Activated CD4-positive, alpha-beta T cell treated with anti-CD3 and anti-CD28 coated beads, Interleukin-2, amount 10 ng/mL, durations not matched to agents 7 days and 5 days (primary cell): ENCODE measurements at regions of chr2 and their contacts with region 1.

Region 1: DNA sequence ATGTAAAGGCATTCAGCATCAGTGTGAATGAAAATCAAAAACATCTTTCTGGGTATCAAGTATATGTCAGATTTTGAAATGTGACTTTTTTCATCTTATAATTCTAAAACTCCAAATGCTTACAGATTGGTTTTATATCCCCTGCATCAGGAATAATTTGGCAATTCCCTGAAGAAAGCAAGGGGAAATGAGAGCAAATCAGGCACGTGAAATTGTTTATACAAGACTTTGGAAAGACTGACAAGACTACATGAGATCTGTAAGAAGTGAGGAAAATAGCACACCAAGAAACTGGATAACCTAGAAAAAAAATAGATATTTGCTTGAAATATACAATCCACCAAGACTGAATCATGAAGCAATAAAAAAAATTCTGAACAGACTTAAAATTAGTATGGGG is 13.8 kb downstream of the COL6A3 start:
- DNase-seq: no peak
- H3K4me3 Mint-ChIP-seq: no peak overlapping the region
- H3K27ac Mint-ChIP-seq: no peak overlapping the region
- H3K4me1 Mint-ChIP-seq: no peaks in the 10 kb centered on the region
- H3K27me3 Mint-ChIP-seq: no peaks in the 10 kb centered on the region

Region 2: DNA sequence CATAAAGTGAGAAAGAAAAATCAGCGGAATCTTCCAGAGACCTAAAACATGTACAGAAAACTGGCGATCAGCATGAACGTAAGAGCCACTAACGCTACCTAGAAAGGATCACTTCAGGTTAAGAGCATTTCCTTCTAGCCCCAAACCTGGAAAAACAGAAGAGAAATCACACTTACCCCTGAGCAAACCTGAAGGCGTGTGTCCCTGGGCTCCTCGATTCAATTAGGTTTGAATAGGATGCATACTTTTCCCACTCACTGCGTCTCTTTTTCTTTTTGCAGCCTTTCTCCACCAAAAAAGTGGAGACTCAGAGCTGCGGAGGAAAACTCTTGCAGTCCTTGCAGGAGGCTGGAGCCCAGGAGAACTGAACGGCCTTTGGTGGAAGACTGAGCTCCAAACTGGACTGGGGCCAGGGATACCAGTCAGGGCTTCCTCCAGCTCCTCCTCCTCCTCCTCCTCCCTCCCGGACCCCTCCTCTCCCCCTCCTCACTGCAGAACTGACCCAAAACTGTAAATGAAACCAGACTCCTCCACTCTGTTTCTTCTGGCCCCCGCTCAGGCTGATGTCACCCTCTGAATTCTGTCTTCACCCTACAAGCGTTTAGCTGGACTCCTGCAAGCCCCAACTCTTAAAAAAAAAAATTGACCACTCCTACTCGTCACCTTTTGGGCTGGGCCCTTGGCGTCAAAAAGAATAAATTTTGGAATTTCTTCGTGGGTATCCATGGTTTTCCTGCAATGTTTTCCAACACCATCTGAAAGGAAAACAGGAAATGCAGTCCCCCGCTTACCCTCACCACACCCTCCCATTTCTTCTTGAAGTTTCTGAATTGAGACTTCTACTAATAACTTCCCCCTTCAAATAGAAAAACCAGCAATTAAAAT is 13.8 kb after region 1 on chr2 and contains the start of gene COL6A3:
- CTCF ChIA-PET with region 1: interaction called, 10 read pairs
- POLR2A ChIA-PET with region 1: no interaction called
- DNase-seq: no peak
- H3K4me3 Mint-ChIP-seq: no peak within 1 kb of the TSS
- H3K27ac Mint-ChIP-seq: no peak within 1 kb of the TSS
- H3K4me1 Mint-ChIP-seq: no peaks in the 10 kb centered on the region
- H3K27me3 Mint-ChIP-seq: no peaks in the 10 kb centered on the region
- total RNA-seq, gene COL6A3: 0.87 to 0.92 TPM